Calu3 (cell line): ENCODE measurements at regions of chr6 and their contacts with region 1.

Region 1: DNA sequence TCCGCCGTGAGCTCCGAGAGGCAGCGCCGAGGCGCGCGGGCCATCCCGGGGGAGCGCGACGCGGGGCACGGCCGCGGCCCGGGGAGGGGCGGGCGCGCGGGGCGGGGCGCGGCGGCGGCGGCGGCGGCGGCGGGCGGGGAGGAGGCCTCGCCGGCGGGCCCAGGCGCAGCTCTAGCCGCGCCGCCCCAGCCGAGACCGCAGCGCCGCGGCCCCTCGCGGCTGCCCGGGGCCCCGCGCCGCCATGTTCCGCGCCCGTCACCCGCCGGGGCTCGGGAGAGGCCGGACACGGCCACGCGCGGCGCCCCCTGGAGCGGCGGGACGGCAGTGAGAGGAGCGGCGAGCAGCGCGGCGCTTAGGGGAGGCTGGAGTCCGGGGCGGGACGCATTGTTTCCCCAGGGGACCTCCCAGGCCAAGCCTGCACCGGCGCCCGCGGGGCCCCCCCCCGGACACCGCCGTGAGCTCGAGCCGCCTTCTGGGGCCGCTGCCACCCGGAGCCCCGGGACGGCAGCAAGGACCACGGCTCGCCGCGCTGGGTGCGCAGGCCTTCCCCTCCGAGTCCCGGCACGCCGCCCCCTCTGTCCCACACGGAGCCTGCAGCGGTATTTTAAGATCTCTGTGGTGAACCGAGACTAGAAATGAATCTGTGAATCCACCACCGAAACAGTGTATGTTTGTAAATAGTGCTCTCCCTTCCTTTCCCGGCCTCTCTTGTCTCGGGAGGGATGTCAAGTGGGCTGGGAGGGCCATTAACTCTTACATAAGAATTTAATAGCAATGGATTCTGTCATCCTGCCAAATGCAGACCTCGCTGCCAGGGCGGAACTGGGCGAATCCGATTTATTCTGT is at the start of gene KIF13A:
- DNase-seq: peak; percentile 65
- H3K4me3 Mint-ChIP-seq: peak within 1 kb of the TSS; percentile 80
- H3K27ac Mint-ChIP-seq: peak within 1 kb of the TSS; percentile 47
- H3K4me1 Mint-ChIP-seq: peaks cover 15% of the 10 kb centered on the region
- H3K27me3 Mint-ChIP-seq: no peaks in the 10 kb centered on the region
- CTCF ChIP-seq: no peak
- total RNA-seq, gene KIF13A: 14.1 and 14.4 TPM in 2 replicates

Region 2: GRCh38 chr6:17469006-17469832 is 518.6 kb before region 1 on chr6:
- CTCF ChIA-PET with region 1: no interaction called
- intact Hi-C with region 1: no loop called
- DNase-seq: no peak
- H3K4me3 Mint-ChIP-seq: no peak overlapping the region
- H3K27ac Mint-ChIP-seq: no peak overlapping the region
- H3K4me1 Mint-ChIP-seq: peaks cover 7% of the 10 kb centered on the region
- H3K27me3 Mint-ChIP-seq: no peaks in the 10 kb centered on the region
- CTCF ChIP-seq: no peak

Region 3: DNA sequence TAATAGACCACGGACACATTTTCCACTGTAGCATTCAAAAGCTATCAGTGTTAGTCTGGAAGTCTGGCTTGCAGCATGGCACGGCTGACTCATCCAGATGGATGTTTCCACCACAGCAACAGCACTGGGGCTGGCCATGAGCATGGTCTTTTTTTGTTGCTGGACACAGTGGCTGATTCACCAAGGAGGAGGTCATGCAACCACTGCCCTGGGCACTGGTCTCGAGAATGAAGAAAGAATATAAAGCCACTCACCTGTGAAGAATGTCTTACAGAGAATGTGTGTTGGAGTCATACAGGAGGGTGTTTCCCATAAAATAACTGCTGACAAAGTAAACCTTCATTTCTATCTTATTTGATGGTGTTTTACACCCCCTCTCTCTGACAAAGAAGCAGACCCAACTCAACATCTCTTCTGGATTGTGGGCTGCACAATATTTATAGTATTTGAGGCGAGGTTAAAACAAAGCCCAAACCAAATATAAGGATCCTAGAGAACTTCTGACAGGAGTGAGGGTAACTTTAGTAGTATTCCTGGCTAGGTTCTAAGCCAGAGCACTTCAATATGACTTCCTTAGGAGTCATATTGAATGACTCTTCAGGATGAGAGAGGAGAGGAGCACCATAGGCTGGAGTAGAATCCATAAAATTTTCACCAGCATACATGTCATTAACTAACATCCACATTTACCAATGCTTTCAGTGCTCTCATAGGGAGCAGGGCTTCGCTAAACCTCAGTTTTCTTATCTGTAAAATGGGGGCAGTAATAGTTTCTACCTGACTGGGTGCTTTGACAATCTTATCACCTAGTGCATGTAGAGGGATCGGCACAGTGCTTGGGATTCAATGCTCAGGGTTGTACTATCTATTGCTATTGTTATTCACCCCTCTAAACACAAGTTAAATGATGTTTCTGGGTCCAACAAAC is 121.7 kb before region 1 on chr6:
- CTCF ChIA-PET with region 1: no interaction called
- intact Hi-C with region 1: loop called (anchors 10 kb)
- DNase-seq: peak; percentile 64
- H3K4me3 Mint-ChIP-seq: no peak overlapping the region
- H3K27ac Mint-ChIP-seq: peak overlapping the region; percentile 27
- H3K4me1 Mint-ChIP-seq: peaks cover 9% of the 10 kb centered on the region
- H3K27me3 Mint-ChIP-seq: no peaks in the 10 kb centered on the region
- CTCF ChIP-seq: no peak

Region 4: GRCh38 chr6:17884498-17885478 is 103.0 kb before region 1 on chr6:
- CTCF ChIA-PET with region 1: no interaction called
- intact Hi-C with region 1: no loop called
- DNase-seq: no peak
- H3K4me3 Mint-ChIP-seq: no peak overlapping the region
- H3K27ac Mint-ChIP-seq: no peak overlapping the region
- H3K4me1 Mint-ChIP-seq: no peaks in the 10 kb centered on the region
- H3K27me3 Mint-ChIP-seq: no peaks in the 10 kb centered on the region
- CTCF ChIP-seq: no peak

Region 5: DNA sequence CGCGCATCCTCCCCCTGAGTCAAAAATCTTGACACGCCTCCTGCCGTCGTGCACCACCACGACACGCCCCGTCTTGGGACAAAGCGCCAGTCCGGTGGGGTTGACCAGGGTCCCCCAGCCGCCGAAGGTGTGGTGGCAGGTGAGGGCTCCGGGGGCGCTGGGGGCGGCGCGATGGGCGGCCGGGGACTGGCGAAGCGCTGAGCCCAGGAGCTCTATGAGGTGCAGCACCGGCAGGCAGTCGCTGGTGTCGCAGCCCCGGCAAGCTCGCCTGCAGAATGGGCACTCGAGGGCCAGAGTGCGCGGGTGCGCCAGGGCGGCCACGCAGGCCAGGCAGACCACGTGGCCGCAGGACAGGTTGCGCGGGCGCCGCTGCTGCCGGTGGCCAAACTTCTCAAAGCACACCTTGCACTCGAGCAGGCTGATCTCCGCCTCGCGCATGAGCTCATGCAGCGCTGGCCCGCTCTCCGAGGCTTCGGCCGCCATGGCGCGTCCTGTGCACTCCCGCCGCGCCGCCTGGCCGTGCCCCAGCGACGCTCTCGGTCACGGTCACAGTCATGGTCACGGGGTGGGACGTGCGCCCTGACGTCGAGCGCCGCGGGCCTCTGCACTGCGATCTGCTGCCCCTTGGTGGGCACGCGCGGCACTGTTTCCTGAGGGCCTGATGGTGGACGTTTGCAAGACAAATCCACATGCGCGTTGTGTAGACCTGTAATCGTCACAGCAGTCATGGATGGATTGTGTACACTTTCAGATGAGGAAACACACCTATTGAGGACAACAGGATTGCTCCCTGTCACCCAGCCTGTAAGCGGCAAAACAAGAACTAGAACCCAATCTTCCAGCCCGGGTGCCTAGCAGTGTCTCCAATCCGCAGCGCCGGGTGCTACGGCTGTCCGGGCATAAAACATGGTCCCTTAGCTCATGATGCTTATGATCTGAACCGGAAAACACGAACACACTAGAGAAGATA is 134.6 kb after region 1 on chr6 and contains the start of gene NHLRC1:
- CTCF ChIA-PET with region 1: no interaction called
- intact Hi-C with region 1: loop called (anchors 10 kb)
- DNase-seq: peak; percentile 82
- H3K4me3 Mint-ChIP-seq: peak within 1 kb of the TSS; percentile 72
- H3K27ac Mint-ChIP-seq: peak within 1 kb of the TSS; percentile 74
- H3K4me1 Mint-ChIP-seq: no peaks in the 10 kb centered on the region
- H3K27me3 Mint-ChIP-seq: no peaks in the 10 kb centered on the region
- CTCF ChIP-seq: peak; percentile 65
- total RNA-seq, gene NHLRC1: 0.92 and 1.1 TPM in 2 replicates